ENCODE measurements at regions of chr7 and their contacts with region 1.

Region 1: DNA sequence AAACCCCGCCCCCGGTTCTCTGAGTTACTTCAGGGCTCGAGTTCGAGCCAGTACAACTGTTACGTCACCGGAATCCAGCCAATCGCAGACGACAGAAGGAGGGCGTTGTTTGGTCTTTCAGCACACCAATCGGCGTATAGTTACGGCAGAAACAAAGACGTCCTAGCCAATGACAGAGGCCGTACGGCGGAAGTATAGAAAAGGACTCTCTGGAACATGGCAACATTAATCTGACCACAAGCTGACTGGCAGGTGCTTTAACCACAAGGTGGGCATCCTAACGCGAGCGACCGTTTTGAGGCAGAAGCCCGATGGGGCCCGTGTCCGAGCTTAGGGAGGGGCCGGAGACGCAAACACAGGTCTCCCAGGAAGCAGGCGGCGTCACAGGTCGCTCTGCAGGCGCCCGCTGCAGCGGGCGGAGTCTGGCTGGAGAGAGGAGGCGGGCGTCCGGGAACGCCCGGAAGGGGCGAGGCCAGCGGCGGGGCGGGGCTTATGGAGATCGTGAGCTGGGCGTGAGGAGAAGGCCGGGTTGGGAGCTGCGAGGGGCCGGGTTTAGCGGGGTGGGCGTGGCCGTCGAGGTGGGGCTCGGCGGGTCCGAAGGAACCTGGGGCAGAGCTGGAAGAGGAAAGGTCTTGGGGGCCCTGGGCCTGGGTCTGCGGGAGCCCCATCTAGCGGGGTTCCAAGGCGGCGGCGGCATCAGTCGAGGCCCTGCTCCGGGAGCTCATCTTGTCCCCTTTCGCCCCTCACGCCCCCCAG is at the start of gene MOSPD3:
- DNase-seq: peak; percentile 100
- H3K4me3 ChIP-seq: peak within 1 kb of the TSS; percentile 67 to 80
- H3K27ac ChIP-seq: peak within 1 kb of the TSS; percentile 82 to 93
- H3K4me1 ChIP-seq: peaks cover 0 to 8% of the 10 kb centered on the region in 2 experiments; a peak in 1 of 4 replicates
- H3K27me3 ChIP-seq: no peaks in the 10 kb centered on the region
- CTCF ChIP-seq: no peak
- EP300 ChIP-seq: 0 out of 4 replicates have a peak, but pooled peaks of 1 of the 2 experiments have one; percentile 37
- RAD21 ChIP-seq: no peak
- polyA plus RNA-seq, gene MOSPD3: 30.0 and 61.7 TPM in 2 replicates

Region 2: DNA sequence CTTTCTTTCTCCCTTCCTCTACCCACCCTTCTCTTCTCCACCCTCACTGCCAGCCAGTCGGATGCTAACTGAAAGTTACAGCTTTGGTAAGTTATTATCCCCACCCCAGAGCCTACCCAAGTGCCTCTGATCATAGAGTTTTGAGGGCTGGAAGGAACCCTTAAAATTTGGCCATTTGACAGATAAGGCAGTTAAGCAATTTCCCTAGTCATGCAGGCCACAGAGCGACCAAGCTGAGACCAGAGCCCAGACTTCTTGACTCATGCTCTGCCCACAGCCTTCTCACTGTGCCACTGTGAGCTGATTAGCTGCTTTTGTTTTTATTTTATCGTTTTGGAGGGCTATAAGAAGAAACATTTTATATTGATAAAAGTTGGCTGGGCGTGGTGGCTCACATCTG is 55.6 kb before region 1 on chr7:
- CTCF ChIA-PET with region 1: interaction called, 15 read pairs
- POLR2A ChIA-PET with region 1: no interaction called
- DNase-seq: no peak
- H3K4me3 ChIP-seq: no peak overlapping the region
- H3K27ac ChIP-seq: no peak overlapping the region
- H3K4me1 ChIP-seq: no peaks in the 10 kb centered on the region; a peak in 1 of 4 replicates
- H3K27me3 ChIP-seq: no peaks in the 10 kb centered on the region
- CTCF ChIP-seq: no peak
- EP300 ChIP-seq: no peak
- RAD21 ChIP-seq: no peak

Region 3: GRCh38 chr7:100586266-100587025 is 25.7 kb before region 1 on chr7 and contains the start of gene FBXO24:
- CTCF ChIA-PET with region 1: interaction called, 4 read pairs
- POLR2A ChIA-PET with region 1: interaction called, 19 read pairs
- DNase-seq: peak; percentile 100
- H3K4me3 ChIP-seq: peak within 1 kb of the TSS; percentile 83 to 92
- H3K27ac ChIP-seq: peak within 1 kb of the TSS; percentile 77 to 94
- H3K4me1 ChIP-seq: peaks cover 6 to 15% of the 10 kb centered on the region in 2 experiments; a peak in 2 of 4 replicates
- H3K27me3 ChIP-seq: no peaks in the 10 kb centered on the region
- CTCF ChIP-seq: no peak
- EP300 ChIP-seq: no peak; a peak in 1 of 4 replicates
- RAD21 ChIP-seq: no peak
- polyA plus RNA-seq, gene FBXO24: 0.71 and 0.94 TPM in 2 replicates

Region 4: GRCh38 chr7:100632951-100633717 is 21.0 kb after region 1 on chr7:
- CTCF ChIA-PET with region 1: interaction called, 70 read pairs
- POLR2A ChIA-PET with region 1: interaction called, 11 read pairs
- DNase-seq: peak; percentile 95
- H3K4me3 ChIP-seq: peak overlapping the region; percentile 43 to 59
- H3K27ac ChIP-seq: no peak overlapping the region
- H3K4me1 ChIP-seq: peaks cover 6% of the 10 kb centered on the region in 2 experiments; a peak in 1 of 4 replicates
- H3K27me3 ChIP-seq: no peaks in the 10 kb centered on the region
- CTCF ChIP-seq: peak; percentile 53
- EP300 ChIP-seq: no peak
- RAD21 ChIP-seq: peak; percentile 46

Region 5: DNA sequence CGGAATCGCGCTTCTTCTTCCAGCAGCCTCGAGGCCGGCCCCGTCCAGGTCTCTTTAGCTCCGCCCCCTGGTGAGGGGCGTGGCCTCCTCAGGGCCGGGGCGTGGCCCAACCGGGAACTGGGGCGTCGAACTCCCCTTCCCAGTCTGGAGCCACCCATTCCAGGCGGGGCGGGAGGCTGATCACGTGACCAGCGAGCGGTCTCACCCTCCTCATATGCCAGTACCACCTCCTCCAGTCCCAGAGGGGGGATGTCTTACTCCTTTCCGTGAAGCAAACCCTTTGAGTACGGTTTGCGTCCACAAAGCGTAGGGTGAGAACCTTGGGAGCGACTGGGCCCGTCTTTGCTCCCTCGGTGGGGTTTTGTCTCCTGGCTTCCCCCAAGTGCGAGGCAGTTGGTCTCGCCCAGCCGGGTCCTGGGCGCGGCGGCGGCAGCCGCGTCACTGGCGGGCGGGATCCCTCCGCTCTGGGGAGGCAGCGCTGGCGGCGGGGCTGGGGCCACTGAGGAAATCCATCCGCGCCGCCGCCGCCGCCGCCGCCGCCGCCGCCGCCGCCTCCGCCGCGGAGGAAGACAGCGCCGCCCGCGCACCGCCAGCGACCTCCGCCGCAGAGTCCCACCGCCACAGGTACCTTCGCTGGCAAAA is 61.3 kb after region 1 on chr7 and contains the start of gene GNB2:
- CTCF ChIA-PET with region 1: interaction called, 5 read pairs
- POLR2A ChIA-PET with region 1: interaction called, 23 read pairs
- DNase-seq: peak; percentile 99
- H3K4me3 ChIP-seq: peak within 1 kb of the TSS; percentile 83 to 98
- H3K27ac ChIP-seq: peak within 1 kb of the TSS; percentile 94 to 99
- H3K4me1 ChIP-seq: peaks cover 0 to 19% of the 10 kb centered on the region in 2 experiments; a peak in 1 of 4 replicates
- H3K27me3 ChIP-seq: no peaks in the 10 kb centered on the region
- CTCF ChIP-seq: no peak
- EP300 ChIP-seq: peak in 1 of 2 experiments; percentile 84; a peak in 2 of 4 replicates
- RAD21 ChIP-seq: no peak
- polyA plus RNA-seq, gene GNB2: 276 and 398 TPM in 2 replicates

Region 6: GRCh38 chr7:100705753-100706671 is 93.9 kb after region 1 on chr7 and contains the start of gene POP7:
- CTCF ChIA-PET with region 1: interaction called, 12 read pairs
- POLR2A ChIA-PET with region 1: interaction called, 9 read pairs
- DNase-seq: peak; percentile 99
- H3K4me3 ChIP-seq: peak within 1 kb of the TSS; percentile 62 to 92
- H3K27ac ChIP-seq: peak within 1 kb of the TSS; percentile 85 to 89
- H3K4me1 ChIP-seq: peaks cover 6 to 14% of the 10 kb centered on the region in 2 experiments; a peak in 2 of 4 replicates
- H3K27me3 ChIP-seq: peaks cover 3% of the 10 kb centered on the region; the same call in 1 of the 2 replicates
- CTCF ChIP-seq: no peak
- EP300 ChIP-seq: no peak
- RAD21 ChIP-seq: no peak
- polyA plus RNA-seq, gene POP7: 63.8 and 81.8 TPM in 2 replicates

Region 7: DNA sequence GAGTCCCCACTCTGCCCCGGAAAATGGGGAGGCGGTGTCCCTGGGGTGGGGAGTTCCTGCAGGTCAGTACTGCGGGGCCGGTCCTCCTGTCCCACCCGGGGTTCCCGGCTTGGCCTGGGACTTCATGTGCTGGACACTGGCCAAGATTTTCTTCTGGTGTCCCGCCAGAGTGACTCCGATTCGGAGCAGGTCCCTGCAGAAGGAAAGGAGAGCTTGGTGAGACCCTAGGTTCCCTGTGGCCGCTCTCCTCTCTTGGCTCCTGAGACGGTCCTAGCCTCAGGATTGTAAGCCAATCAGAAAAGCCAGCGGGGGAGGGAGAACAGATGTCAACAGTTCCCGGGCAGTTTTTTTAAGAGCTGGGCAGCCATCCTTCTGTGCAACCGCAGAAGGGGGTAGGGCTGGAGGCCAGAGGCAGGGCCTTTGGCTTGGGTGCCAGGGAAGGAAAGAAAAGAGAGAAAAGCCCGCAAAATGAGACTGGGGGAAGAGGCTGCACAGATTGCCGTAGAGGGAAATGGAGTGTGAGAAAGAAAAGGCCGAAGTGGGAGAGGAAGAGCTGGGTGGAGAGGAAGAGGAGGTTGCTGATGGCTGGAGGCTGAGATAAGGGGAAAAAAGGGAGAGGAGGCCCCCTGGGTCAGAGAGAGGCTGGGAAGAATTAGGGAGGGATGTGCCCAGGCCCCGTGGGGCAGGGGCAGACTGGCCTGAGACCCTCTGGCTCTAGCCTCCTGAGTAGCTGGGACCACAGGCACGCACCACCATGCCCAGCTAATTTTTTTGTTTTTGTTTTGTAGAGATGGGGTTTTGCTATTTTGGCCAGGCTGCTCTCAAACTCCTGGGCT is 191.5 kb after region 1 on chr7:
- CTCF ChIA-PET with region 1: no interaction called
- POLR2A ChIA-PET with region 1: no interaction called
- DNase-seq: peak; percentile 93
- H3K4me3 ChIP-seq: no peak overlapping the region
- H3K27ac ChIP-seq: peak overlapping the region; percentile 53 to 58
- H3K4me1 ChIP-seq: peaks cover 21% of the 10 kb centered on the region in 2 experiments; a peak in 3 of 4 replicates
- H3K27me3 ChIP-seq: no peaks in the 10 kb centered on the region
- CTCF ChIP-seq: no peak
- EP300 ChIP-seq: peak in 1 of 2 experiments; percentile 26; a peak in 1 of 4 replicates
- RAD21 ChIP-seq: no peak

Region 8: DNA sequence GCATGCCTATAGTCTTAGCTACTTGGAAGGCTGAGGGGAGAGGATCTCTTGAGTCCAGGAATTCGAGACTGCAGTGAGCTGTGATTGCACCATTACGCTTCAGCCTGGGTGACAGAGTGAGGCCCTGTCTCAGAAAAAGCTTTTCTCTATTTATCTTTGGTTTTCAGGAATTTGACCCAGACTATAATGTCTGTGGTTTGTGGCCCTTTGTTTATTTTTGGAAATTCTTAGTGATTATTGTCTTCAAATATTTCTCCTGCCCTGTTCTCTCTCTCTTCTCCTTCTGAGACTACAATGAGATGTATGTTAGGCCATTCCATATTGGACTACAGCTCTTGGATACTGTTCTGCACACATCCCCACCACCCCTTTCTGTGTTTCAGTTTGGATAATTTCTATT is 361.9 kb after region 1 on chr7:
- CTCF ChIA-PET with region 1: no interaction called
- POLR2A ChIA-PET with region 1: no interaction called
- DNase-seq: no peak
- H3K4me3 ChIP-seq: no peak overlapping the region
- H3K27ac ChIP-seq: no peak overlapping the region
- H3K4me1 ChIP-seq: no peaks in the 10 kb centered on the region
- H3K27me3 ChIP-seq: peaks cover 66% of the 10 kb centered on the region
- CTCF ChIP-seq: no peak
- EP300 ChIP-seq: no peak
- RAD21 ChIP-seq: no peak